Activated naive CD4-positive, alpha-beta T cell treated with anti-CD3 and anti-CD28 coated beads for 36 hours (primary cell): ENCODE measurements at regions of chr1 and their contacts with region 1.

Region 1: DNA sequence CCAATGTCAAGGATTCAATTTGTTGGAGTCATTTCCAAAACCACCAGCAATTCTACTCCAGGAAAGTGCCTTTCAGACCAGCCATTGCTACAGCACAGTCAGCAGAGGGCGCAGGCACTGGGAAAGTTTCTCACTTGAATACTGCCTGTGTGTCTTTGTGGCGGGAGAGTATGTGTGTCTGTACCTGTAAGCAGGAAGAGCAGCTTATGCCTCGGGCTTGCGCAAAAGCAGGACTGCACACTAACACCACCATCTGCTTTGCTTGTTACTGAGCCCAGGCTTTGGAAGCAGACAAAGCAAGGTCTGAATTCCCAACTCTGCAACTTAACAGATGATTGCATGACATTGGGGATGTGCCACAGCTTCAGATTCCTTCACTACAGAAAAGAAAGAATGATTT is 7.0 kb upstream of the CTSE start:
- DNase-seq: peak; percentile 86
- H3K4me3 Mint-ChIP-seq: no peak overlapping the region
- H3K27ac Mint-ChIP-seq: no peak overlapping the region
- H3K4me1 Mint-ChIP-seq: peaks cover 6% of the 10 kb centered on the region
- H3K27me3 Mint-ChIP-seq: peaks cover 18% of the 10 kb centered on the region

Region 2: DNA sequence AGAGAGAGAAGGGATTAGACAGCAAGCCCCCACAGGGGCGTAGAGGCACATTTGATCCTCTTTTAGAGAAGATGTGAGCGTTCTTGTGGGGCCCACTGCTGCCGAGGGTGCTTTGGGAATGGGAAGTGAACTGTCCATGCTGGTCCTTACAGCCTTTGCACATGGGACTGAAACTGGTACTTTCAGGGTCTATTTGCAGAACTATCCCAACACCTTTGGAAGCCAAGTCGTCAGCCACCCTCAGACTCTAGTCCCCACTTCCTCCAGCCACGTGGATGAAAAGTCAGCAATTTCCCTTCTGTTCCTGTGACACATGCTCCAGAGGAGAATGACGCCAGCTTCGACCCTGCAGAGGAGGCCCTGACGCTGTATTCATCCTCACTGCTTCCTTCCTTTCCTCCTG is 24.9 kb before region 1 on chr1:
- CTCF ChIA-PET with region 1: no interaction called
- intact Hi-C with region 1: no loop called
- DNase-seq: no peak
- H3K4me3 Mint-ChIP-seq: no peak overlapping the region
- H3K27ac Mint-ChIP-seq: no peak overlapping the region
- H3K4me1 Mint-ChIP-seq: peaks cover 20% of the 10 kb centered on the region
- H3K27me3 Mint-ChIP-seq: peaks cover 6% of the 10 kb centered on the region

Region 3: GRCh38 chr1:206094024-206094423 is 63.3 kb after region 1 on chr1:
- CTCF ChIA-PET with region 1: interaction called, 12 read pairs
- intact Hi-C with region 1: no loop called
- DNase-seq: no peak
- H3K4me3 Mint-ChIP-seq: no peak overlapping the region
- H3K27ac Mint-ChIP-seq: no peak overlapping the region
- H3K4me1 Mint-ChIP-seq: no peaks in the 10 kb centered on the region
- H3K27me3 Mint-ChIP-seq: peaks cover 5% of the 10 kb centered on the region

Region 4: DNA sequence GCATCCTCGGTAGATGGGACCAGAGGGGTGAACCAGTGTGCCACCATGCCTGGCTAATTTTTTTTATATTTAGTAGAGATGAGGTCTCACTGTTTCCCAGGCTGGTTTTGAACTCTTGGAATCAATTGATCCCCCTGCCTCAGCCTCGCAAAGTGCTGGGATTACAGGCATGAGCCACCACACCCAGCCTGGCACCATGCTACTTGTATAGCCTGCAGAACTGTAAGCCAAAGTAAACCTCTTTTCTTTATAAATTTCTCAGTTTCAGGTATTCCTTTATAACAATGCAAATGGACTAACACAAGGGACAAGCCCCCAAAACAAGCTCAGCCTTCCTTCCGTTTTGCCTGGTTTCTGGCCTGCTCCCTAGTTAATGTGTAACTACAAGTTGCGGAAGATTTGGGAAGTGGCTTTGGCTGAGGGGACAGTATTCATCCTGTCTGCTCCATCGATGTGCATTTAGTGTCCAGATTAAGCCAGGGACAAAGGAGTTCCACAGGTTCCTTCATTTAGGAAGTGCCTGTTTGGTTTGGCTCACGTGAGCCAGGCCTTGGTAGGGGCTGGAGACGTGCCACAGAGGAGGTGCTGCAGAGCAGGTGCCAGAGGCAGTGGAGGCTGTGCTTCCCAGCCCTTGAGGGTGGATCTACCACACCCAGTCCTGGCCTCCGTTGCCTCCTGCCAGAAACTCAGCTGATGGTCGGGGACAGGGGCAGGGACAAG is 82.0 kb after region 1 on chr1:
- CTCF ChIA-PET with region 1: interaction called, 177 read pairs
- intact Hi-C with region 1: no loop called
- DNase-seq: no peak
- H3K4me3 Mint-ChIP-seq: no peak overlapping the region
- H3K27ac Mint-ChIP-seq: no peak overlapping the region
- H3K4me1 Mint-ChIP-seq: peaks cover 9% of the 10 kb centered on the region
- H3K27me3 Mint-ChIP-seq: peaks cover 18% of the 10 kb centered on the region